ENCODE measurements at regions of chr19 and their contacts with region 1.

Region 1: DNA sequence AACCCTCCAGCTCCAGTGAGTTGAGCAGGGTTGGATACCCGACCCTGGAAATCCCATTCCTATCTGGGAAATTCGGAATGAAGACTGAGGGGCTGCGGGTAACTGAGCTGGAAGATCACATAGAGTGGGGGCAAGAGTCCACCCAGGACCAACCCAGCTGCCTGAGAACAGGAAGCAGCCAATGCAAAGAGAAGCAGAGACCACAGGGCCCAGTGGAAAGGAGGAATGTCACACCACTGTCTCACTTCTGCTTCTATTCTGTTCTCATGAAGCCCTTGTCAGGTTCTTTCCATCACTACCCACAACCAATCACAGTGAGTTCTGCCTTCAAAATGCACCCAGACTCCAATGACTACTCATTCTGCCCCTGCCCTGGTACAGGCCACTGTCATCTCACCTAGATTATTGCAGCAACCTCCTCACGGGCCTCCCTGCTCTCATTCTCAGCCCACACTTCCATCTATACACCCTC is 15.3 kb downstream of the DYRK1B start:
- DNase-seq: no peak
- ATAC-seq: no peak

Region 2: DNA sequence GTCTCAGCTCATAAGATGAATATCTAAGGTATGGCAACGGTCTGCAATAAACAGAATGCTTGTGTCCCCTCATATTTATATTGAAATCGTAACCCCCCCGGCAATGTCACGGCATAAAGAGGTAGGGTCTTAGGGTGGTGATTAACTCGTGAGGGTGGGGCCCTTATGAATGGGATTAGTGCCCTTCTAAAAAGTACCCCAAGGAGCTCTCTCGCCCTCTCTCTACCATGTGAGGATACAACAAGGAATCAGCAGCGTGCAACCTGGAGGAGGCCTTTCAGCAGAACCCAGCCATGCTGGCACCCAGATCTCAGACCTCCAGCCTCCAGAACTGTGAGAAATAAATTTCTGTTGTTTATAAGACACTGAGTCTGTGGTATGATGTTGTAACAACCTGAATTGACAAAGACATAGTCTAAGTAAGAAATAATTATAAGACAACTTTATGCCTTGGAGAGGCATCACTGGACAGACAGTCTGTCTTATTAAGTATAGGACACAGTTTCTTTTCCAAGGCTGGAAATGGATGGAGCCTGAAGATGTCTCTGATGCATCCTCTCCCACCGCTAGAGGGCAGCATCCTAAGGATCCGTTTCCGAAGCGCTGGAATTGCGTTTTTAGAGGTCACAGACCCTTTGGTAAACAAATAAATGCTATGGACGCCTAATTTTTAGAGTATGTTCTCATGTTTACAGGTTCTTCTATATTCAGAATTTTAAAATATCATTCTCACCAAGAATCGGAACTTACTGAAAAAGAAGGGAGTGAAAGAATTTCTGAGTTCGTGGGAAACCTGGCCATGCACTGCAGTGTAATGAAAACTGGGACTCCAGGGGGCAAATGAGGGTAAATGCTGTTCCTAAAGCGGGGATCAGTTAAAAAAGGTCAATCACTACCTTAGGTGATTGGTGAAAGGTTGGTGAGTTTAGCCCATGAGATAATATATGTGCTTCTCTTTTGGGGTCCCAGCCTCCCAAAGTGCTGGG is 53.3 kb before region 1 on chr19:
- intact Hi-C with region 1: no loop called
- DNase-seq: no peak
- ATAC-seq: no peak

Region 3: DNA sequence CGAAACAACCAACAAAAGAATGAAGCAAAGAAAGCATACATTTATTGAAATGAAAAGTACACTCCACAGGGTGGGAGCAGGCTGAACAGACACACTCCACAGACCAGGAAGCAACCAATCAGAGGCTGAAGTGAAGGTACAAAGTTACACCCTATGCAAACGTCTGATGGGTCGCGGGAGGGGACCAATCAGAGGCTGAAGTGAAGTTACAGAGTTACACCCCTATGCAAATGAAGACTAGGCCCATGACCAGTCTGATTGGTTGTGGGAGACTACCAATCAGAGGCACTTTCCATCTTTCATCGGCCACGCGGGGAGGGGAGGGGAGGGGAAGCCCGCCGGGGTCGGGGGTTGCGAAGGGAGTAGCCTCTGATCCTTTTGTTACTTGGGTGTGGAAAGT is 39.9 kb after region 1 on chr19:
- intact Hi-C with region 1: no loop called
- DNase-seq: peak; percentile 72
- ATAC-seq: peak; percentile 94

Region 4: DNA sequence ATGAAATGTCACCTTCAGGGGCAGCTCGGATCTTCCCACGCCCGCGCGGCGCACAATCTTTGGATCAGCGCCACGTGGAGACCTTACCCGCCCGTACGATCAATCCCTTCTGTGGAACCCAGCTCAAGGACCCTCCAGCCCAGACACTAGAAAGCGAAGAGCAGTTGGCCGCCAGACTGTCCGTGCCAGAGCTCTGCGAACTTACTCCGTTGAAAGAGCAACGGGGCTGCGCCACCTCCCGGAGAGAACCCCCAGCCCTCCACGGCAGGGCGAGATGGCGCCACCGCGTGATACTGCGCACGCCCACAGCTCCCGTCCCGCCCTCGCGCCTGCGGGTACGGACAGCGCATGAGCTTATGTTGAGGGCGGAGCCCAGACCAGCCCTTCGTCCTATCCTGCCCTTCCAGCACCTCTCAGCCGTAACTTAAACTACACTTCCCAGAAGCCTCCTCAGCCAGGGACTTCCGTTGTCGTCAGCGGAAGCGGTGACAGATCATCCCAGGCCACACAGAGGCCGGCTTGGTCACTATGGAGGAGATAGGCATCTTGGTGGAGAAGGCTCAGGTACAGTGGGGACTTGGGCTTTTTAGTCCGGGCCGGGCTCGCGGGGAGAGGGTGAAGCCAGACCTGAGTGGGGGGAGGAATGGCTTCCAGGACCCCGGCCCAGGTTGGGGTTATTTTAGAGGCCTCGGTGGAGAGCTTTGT is 152.2 kb after region 1 on chr19 and contains the start of gene PSMC4:
- intact Hi-C with region 1: loop called (anchors 10 kb)
- DNase-seq: peak; percentile 99
- ATAC-seq: peak; percentile 99
- total RNA-seq, gene PSMC4: 64.8 TPM

Measured in Right ventricle myocardium superior (tissue), 1 donor.